ENCODE measurements at regions of chr2 and their contacts with region 1.

Region 1: GRCh38 chr2:200602584-200602983 is 16.8 kb downstream of the AOX1 start:
- DNase-seq: no peak
- CTCF ChIP-seq: no peak

Region 2: GRCh38 chr2:200575957-200576356 is 26.6 kb before region 1 on chr2:
- CTCF ChIA-PET with region 1: no interaction called
- POLR2A ChIA-PET with region 1: no interaction called
- DNase-seq: peak; percentile 18
- CTCF ChIP-seq: peak; percentile 25

Region 3: GRCh38 chr2:200615247-200615646 is 12.7 kb after region 1 on chr2:
- CTCF ChIA-PET with region 1: interaction called, 11 read pairs
- POLR2A ChIA-PET with region 1: no interaction called
- DNase-seq: no peak
- CTCF ChIP-seq: no peak